ENCODE measurements at regions of chr17 and their contacts with region 1.

Region 1: DNA sequence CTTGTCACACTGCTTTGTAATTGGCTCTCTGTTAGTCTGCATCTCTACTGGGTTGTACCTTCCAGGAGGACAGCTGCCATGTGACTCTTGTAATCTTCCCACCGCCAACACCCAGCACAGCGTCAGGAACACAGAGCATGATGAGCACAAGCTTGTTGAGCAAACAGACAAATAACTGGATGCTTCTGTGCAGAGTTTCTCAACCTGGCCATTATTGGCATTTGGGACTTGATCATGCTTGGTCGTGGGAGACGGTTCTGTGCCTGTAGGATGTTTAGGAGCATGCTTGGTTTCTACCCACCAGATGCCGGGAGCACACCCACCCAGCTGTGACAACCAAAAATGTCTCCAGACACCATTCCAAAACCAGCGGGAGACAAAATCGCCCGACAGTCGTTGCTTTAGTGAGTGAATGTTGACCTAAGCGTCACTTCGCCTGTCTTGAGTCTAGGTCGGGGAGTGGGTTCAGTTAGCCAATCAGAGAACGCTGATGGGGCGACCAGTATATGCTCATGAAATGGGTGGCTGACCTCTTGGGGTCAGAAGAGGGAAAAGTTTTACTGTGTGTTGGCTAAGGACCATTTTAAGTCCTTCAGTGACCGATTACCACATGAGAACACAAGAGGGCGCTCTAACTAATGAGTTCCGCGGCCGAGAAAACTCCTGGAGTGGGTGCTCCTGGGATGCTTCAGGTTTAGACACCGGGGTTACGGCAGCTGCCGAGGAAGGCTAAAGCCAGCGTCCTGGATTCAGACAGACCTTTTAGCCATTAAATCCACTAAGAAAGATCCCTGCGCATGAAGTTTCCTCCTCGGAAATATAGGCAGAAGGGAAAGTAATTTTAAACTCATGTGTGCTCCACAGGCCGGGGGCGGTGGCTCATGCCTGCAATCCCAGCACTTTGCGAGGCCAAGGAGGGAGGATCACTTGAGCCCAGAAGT is 57.8 kb upstream of the TEX2 start:
- DNase-seq: peak; percentile 25
- H3K4me3 ChIP-seq: no peak overlapping the region
- H3K27ac ChIP-seq: no peak overlapping the region
- H3K4me1 ChIP-seq: no peaks in the 10 kb centered on the region
- H3K27me3 ChIP-seq: peaks cover 5% of the 10 kb centered on the region
- CTCF ChIP-seq: peak; percentile 73 to 76 (median 76)

Region 2: GRCh38 chr17:64385187-64386083 is 64.6 kb after region 1 on chr17:
- dilution Hi-C with region 1: no loop called
- DNase-seq: no peak
- H3K4me3 ChIP-seq: no peak overlapping the region
- H3K27ac ChIP-seq: no peak overlapping the region
- H3K4me1 ChIP-seq: peaks cover 14% of the 10 kb centered on the region
- H3K27me3 ChIP-seq: peaks cover 8% of the 10 kb centered on the region
- CTCF ChIP-seq: no peak

Region 3: GRCh38 chr17:64420143-64420971 is 99.5 kb after region 1 on chr17:
- dilution Hi-C with region 1: loop called (anchors 10 kb)
- DNase-seq: peak; percentile 4
- H3K4me3 ChIP-seq: no peak overlapping the region
- H3K27ac ChIP-seq: no peak overlapping the region
- H3K4me1 ChIP-seq: no peaks in the 10 kb centered on the region
- H3K27me3 ChIP-seq: no peaks in the 10 kb centered on the region
- CTCF ChIP-seq: peak; percentile 62 to 72 (median 68)

Region 4: DNA sequence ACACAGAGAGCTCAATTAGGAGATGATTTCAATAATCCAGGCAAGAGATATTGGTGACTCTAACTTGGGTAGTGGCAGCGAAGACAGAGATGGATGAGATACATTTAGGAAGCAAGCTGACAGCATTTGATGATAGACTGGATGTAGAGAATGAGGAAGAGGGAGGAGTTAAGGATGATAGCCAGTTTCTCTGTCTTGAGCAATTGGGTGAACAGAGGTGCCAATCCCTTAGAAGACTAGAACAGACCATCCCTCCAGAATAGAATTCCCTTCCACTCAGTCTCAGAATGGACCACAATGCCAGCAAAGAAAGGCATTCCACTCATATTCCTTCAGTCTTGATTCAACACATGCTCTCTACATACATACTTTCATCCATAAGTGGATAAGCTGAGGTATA is 158.8 kb after region 1 on chr17:
- dilution Hi-C with region 1: loop called (anchors 10 kb)
- DNase-seq: no peak
- H3K4me3 ChIP-seq: no peak overlapping the region
- H3K27ac ChIP-seq: no peak overlapping the region
- H3K4me1 ChIP-seq: no peaks in the 10 kb centered on the region
- H3K27me3 ChIP-seq: no peaks in the 10 kb centered on the region
- CTCF ChIP-seq: no peak

Measured in keratinocyte (primary cell).